ENCODE measurements at regions of chr9 and their contacts with region 1.

Region 1: DNA sequence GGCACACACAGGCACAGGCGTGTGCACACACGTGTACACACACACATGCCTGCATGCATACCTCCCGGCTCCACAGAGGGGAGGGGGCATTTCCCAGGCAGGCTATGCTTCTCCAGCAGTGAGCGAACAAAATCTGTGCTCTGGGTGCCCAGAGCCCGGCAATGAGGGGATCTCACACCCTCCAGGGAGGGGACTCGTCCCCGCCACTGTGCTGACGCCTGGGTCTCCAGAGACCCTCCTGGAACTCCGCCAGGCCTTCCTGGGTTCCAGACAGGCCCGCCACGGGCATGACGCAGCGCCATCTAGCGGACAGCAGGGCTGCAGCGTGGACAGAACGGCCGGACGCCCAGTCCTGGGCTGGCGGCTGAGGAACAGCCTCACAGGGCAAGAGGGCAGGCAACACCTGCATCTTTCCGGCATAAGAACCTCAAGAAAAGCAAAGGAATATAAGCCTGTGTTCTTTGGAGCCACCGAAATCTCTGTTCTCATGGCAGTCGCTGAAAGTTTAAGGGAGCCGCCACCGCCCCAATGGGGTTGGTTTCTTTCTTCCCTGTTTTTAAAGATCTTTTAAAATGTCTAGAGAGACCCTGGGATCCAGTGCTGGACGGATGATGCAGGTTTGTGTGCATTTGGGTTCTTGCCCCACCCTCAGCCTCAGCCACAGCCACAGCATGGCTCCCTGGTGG is 135.6 kb upstream of the PPP1R26 start:
- DNase-seq: peak; percentile 76
- ATAC-seq: peak; percentile 42
- H3K4me3 Mint-ChIP-seq: no peak overlapping the region
- H3K27ac Mint-ChIP-seq: no peak overlapping the region
- H3K4me1 Mint-ChIP-seq: no peaks in the 10 kb centered on the region
- H3K27me3 Mint-ChIP-seq: peaks cover 6% of the 10 kb centered on the region

Region 2: DNA sequence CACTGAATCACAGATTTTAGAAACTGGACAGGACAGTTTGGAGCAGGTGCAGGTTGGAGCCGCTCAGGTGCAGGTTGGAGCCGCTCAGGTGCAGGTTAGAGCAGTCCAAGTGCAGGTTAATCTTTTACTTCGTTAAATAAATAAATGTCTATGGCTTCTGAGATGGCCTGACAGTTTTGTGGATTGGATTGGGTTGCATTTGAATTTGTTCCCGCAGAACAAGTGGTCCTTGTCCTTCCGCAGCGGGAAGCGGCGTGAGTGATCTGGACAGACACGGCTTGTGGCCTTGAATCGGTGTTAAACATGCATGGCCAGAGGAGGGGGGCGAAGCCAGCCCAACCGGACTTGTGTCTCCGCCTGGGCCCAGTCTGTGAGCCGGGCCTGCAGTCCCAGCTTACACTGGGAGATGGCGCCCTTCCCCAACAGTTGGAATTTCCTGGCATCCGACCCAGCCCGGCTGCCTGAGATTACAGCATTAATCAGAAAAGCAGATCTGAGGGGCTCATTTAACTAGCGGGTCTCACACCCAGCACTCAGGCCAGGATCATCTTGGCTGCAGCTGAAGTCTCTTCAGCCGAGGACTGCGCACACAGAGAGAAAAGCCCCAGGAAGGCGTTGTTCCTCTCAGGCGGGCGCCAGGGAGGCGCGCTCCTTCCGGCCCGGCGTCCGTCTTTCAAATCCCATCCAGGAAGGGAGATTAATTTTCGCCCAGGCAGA is 258.0 kb before region 1 on chr9:
- CTCF ChIA-PET with region 1: no interaction called
- POLR2A ChIA-PET with region 1: no interaction called
- intact Hi-C with region 1: loop called (anchors 1 kb)
- DNase-seq: peak; percentile 77
- ATAC-seq: no peak
- H3K4me3 Mint-ChIP-seq: no peak overlapping the region
- H3K27ac Mint-ChIP-seq: no peak overlapping the region
- H3K4me1 Mint-ChIP-seq: peaks cover 3% of the 10 kb centered on the region
- H3K27me3 Mint-ChIP-seq: peaks cover 36% of the 10 kb centered on the region

Measured in activated CD4-positive, alpha-beta T cell treated with anti-CD3 and anti-CD28 coated beads for 36 hours (primary cell).